ENCODE measurements at regions of chr6 and their contacts with region 1.

Region 1: GRCh38 chr6:42782622-42783176 is 847 bp downstream of the BICRAL start:
- DNase-seq: peak; percentile 82 to 87 (median 82)
- H3K4me3 ChIP-seq: peak overlapping the region; percentile 80 to 88
- H3K4me3 Mint-ChIP-seq: peak overlapping the region; percentile 95 to 100 (median 99)
- H3K27ac ChIP-seq: peak overlapping the region; percentile 100
- H3K27ac Mint-ChIP-seq: peak overlapping the region in 6 of 7 donors; percentile 100
- H3K4me1 ChIP-seq: peaks cover 68% of the 10 kb centered on the region
- H3K4me1 Mint-ChIP-seq: peaks cover 20 to 46% (median 28%) of the 10 kb centered on the region in 4 donors
- H3K27me3 ChIP-seq: no peaks in the 10 kb centered on the region
- H3K27me3 Mint-ChIP-seq: peaks cover 0 to 1% of the 10 kb centered on the region in 2 donors

Region 2: GRCh38 chr6:42692137-42692911 is 90.4 kb before region 1 on chr6:
- CTCF ChIA-PET with region 1: no interaction called
- POLR2A ChIA-PET with region 1: interaction called, 10 read pairs
- intact Hi-C with region 1: no loop called
- DNase-seq: no peak
- H3K4me3 ChIP-seq: no peak overlapping the region
- H3K4me3 Mint-ChIP-seq: no peak overlapping the region
- H3K27ac ChIP-seq: no peak overlapping the region
- H3K27ac Mint-ChIP-seq: peak overlapping the region in 5 of 7 donors; percentile 25 to 62 (median 29)
- H3K4me1 ChIP-seq: peaks cover 12% of the 10 kb centered on the region
- H3K4me1 Mint-ChIP-seq: peaks cover 15 to 25% (median 20%) of the 10 kb centered on the region in 4 donors
- H3K27me3 ChIP-seq: no peaks in the 10 kb centered on the region
- H3K27me3 Mint-ChIP-seq: no peaks in the 10 kb centered on the region

Region 3: GRCh38 chr6:42756722-42757121 is 26.0 kb before region 1 on chr6:
- CTCF ChIA-PET with region 1: no interaction called
- POLR2A ChIA-PET with region 1: interaction called, 1,692 read pairs
- intact Hi-C with region 1: no loop called
- DNase-seq: no peak
- H3K4me3 ChIP-seq: no peak overlapping the region
- H3K4me3 Mint-ChIP-seq: no peak overlapping the region
- H3K27ac ChIP-seq: no peak overlapping the region
- H3K27ac Mint-ChIP-seq: peak overlapping the region in 1 of 7 donors; percentile 81
- H3K4me1 ChIP-seq: peaks cover under 1% of the 10 kb centered on the region
- H3K4me1 Mint-ChIP-seq: peaks cover 18 to 44% (median 33%) of the 10 kb centered on the region in 4 donors
- H3K27me3 ChIP-seq: no peaks in the 10 kb centered on the region
- H3K27me3 Mint-ChIP-seq: no peaks in the 10 kb centered on the region

Region 4: GRCh38 chr6:42771741-42772100 is 11.0 kb before region 1 on chr6:
- CTCF ChIA-PET with region 1: interaction called, 11 read pairs
- POLR2A ChIA-PET with region 1: interaction called, 802 read pairs
- intact Hi-C with region 1: loop called (anchors 1 kb)
- DNase-seq: peak in 4 of 5 donors; percentile 75 to 79 (median 77)
- H3K4me3 ChIP-seq: peak overlapping the region; percentile 7 to 11
- H3K4me3 Mint-ChIP-seq: peak overlapping the region; percentile 72 to 90 (median 84)
- H3K27ac ChIP-seq: peak overlapping the region; percentile 89
- H3K27ac Mint-ChIP-seq: peak overlapping the region; percentile 97 to 100 (median 100)
- H3K4me1 ChIP-seq: peaks cover 77% of the 10 kb centered on the region
- H3K4me1 Mint-ChIP-seq: peaks cover 54 to 88% (median 70%) of the 10 kb centered on the region in 4 donors
- H3K27me3 ChIP-seq: no peaks in the 10 kb centered on the region
- H3K27me3 Mint-ChIP-seq: no peaks in the 10 kb centered on the region

Region 5: GRCh38 chr6:42819803-42820511 is 37.3 kb after region 1 on chr6:
- CTCF ChIA-PET with region 1: no interaction called
- POLR2A ChIA-PET with region 1: interaction called, 10 read pairs
- intact Hi-C with region 1: loop called (anchors 5 kb)
- DNase-seq: peak in 4 of 5 donors; percentile 17 to 24 (median 22)
- H3K4me3 ChIP-seq: no peak overlapping the region
- H3K4me3 Mint-ChIP-seq: peak overlapping the region in 2 of 8 donors; percentile 11 to 34
- H3K27ac ChIP-seq: no peak overlapping the region
- H3K27ac Mint-ChIP-seq: peak overlapping the region; percentile 35 to 79 (median 57)
- H3K4me1 ChIP-seq: peaks cover 15% of the 10 kb centered on the region
- H3K4me1 Mint-ChIP-seq: peaks cover 16 to 30% (median 25%) of the 10 kb centered on the region in 4 donors
- H3K27me3 ChIP-seq: no peaks in the 10 kb centered on the region
- H3K27me3 Mint-ChIP-seq: no peaks in the 10 kb centered on the region

Region 6: GRCh38 chr6:42890311-42891198 is 107.9 kb after region 1 on chr6:
- CTCF ChIA-PET with region 1: no interaction called
- POLR2A ChIA-PET with region 1: interaction called, 14 read pairs
- intact Hi-C with region 1: no loop called
- DNase-seq: peak; percentile 87 to 91 (median 89)
- H3K4me3 ChIP-seq: peak overlapping the region; percentile 59 to 97
- H3K4me3 Mint-ChIP-seq: peak overlapping the region; percentile 94 to 99 (median 98)
- H3K27ac ChIP-seq: peak overlapping the region; percentile 92
- H3K27ac Mint-ChIP-seq: peak overlapping the region; percentile 93 to 99 (median 97)
- H3K4me1 ChIP-seq: peaks cover 15% of the 10 kb centered on the region
- H3K4me1 Mint-ChIP-seq: peaks cover 9 to 21% (median 12%) of the 10 kb centered on the region in 4 donors
- H3K27me3 ChIP-seq: no peaks in the 10 kb centered on the region
- H3K27me3 Mint-ChIP-seq: no peaks in the 10 kb centered on the region

Region 7: GRCh38 chr6:42921801-42922200 is 139.1 kb after region 1 on chr6:
- CTCF ChIA-PET with region 1: no interaction called
- POLR2A ChIA-PET with region 1: no interaction called
- intact Hi-C with region 1: no loop called
- DNase-seq: no peak
- H3K4me3 ChIP-seq: no peak overlapping the region
- H3K4me3 Mint-ChIP-seq: no peak overlapping the region
- H3K27ac ChIP-seq: no peak overlapping the region
- H3K27ac Mint-ChIP-seq: no peak overlapping the region
- H3K4me1 ChIP-seq: no peaks in the 10 kb centered on the region
- H3K4me1 Mint-ChIP-seq: no peaks in the 10 kb centered on the region
- H3K27me3 ChIP-seq: no peaks in the 10 kb centered on the region
- H3K27me3 Mint-ChIP-seq: no peaks in the 10 kb centered on the region

Measured in CD4-positive, alpha-beta memory T cell (primary cell).